Adrenal gland (tissue), 19 donors: ENCODE measurements at regions of chr5 and their contacts with region 1.

Region 1: GRCh38 chr5:61472172-61472958 is 140.3 kb downstream of the ZSWIM6 start:
- DNase-seq: peak in 6 of 7 donors; percentile 18 to 59 (median 30)
- H3K4me3 ChIP-seq: no peak overlapping the region
- H3K27ac ChIP-seq: no peak overlapping the region
- H3K4me1 ChIP-seq: peaks cover 13 to 38% of the 10 kb centered on the region in 2 donors
- H3K27me3 ChIP-seq: no peaks in the 10 kb centered on the region
- CTCF ChIP-seq: no peak
- POLR2A ChIP-seq: no peak

Region 2: GRCh38 chr5:61245486-61245885 is 226.9 kb before region 1 on chr5:
- intact Hi-C with region 1: no loop called
- DNase-seq: peak in 1 of 7 donors; percentile 13
- H3K4me3 ChIP-seq: no peak overlapping the region
- H3K27ac ChIP-seq: no peak overlapping the region
- H3K4me1 ChIP-seq: peaks cover 0 to 6% of the 10 kb centered on the region in 2 donors
- H3K27me3 ChIP-seq: no peaks in the 10 kb centered on the region
- CTCF ChIP-seq: no peak
- POLR2A ChIP-seq: no peak

Region 3: DNA sequence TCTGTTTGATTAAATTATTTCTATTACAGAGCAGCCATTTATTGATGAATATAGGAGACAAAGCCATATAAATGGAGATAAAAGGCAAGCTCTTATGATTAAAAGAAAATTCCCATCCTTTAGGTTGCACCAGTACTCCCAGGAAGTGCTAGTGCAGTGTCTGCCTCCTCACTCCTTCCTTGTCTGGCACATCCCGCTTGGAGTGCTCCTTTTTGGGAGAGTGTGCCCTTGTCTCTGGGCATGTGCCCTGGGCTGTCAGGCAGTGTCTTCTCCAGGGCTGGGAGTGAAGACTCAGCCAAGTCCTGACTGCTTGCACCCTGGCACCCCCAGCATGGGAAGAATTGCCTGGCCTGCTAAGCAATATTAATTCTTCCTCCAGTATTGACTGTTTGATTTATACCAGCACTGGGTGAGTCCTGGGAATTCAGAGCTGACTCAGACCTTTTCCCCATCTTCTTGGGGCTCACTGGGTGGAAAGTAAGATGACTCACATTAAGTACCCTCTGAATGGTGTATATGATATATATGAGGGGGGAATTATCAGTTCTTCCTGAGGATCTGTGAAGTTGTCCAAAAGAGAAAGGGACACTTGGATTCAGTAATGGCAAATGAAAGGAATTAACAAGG is 78.2 kb before region 1 on chr5:
- intact Hi-C with region 1: loop called in 1 of 2 experiments (anchors 10 kb)
- DNase-seq: no peak
- H3K4me3 ChIP-seq: no peak overlapping the region
- H3K27ac ChIP-seq: no peak overlapping the region
- H3K4me1 ChIP-seq: peaks cover 0 to 1% of the 10 kb centered on the region in 2 donors
- H3K27me3 ChIP-seq: no peaks in the 10 kb centered on the region
- CTCF ChIP-seq: no peak
- POLR2A ChIP-seq: no peak